HCT116 (cell line): ENCODE measurements at regions of chr5 and their contacts with region 1.

Region 1: DNA sequence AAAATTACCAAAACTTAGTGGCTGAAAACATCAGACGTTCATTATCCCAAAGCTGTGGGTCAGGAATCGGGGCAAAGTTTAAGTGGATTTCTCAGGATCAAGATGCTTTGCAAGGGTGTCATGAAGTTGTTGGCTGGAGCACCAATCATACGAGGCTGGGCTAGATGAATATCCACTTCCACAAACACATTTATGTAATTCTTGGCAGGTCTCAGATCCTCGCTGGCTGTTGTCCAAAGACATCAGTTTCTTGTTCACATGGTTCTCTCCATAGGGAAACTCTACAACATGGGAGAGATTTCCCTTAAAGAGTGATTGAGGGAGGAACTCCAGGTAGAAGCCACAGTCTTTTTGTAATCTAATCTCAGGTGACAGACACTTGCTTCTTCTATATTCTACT is 20.2 kb upstream of the CCDC192 start:
- DNase-seq: no peak
- ATAC-seq: no peak
- H3K4me3 ChIP-seq: no peak overlapping the region
- H3K27ac ChIP-seq: no peak overlapping the region
- H3K4me1 ChIP-seq: no peaks in the 10 kb centered on the region
- H3K27me3 ChIP-seq: no peaks in the 10 kb centered on the region
- CTCF ChIP-seq: no peak
- POLR2A ChIP-seq: no peak
- RAD21 ChIP-seq: no peak

Region 2: DNA sequence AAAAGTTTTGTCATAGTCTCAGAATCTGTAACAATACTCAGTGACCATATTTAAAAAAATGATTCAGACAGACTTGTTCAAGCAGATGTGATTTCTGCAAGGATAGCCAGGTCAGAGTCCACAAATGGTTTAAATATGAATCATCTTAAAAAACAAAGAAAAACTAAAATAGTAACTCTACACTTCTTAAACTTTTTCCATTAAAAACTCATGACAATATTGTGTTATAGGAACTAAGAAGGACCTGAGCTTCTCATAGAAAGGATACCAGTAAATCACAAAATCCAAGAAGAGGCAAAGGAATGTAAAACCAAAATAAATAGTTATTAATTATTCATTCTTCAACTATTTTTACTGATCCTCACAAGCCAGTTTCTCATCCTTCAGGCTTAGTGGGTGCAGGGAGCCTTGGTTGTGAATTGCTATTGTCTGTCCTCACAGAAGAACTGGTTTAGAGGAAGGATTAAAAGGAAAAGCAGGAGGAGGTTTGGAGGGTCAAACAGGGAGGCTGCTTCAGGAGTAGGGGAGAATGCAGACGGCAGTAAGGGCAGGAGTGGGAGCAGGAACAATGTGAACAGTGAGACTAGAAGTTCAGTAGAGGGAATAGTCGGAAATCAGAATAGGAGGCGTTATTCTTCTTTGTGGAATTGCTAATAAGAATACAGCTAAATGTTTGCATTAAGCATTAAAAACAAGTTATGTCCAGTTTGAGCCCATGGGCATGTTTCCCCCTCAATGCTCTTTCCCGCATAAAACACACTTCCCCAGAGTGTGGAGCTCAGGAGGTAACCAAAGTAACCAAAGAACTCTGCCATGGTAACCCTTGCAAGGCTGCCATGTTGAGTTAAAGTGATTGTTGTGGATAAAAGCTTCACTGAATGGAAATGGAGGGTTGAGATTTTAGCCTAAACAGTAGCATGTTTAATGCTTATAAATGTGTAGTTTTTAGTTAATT is 130.9 kb after region 1 on chr5:
- CTCF ChIA-PET with region 1: no interaction called
- POLR2A ChIA-PET with region 1: no interaction called
- RAD21 ChIA-PET with region 1: no interaction called
- intact Hi-C with region 1: loop called (anchors 5 kb)
- DNase-seq: no peak
- ATAC-seq: peak; percentile 63
- H3K4me3 ChIP-seq: peak overlapping the region in 1 of 2 experiments; percentile 4; a peak in 1 of 4 replicates
- H3K27ac ChIP-seq: no peak overlapping the region; the same call in 1 of the 2 replicates
- H3K4me1 ChIP-seq: peaks cover 12 to 23% of the 10 kb centered on the region in 2 experiments; a peak in 3 of 4 replicates
- H3K27me3 ChIP-seq: no peaks in the 10 kb centered on the region
- CTCF ChIP-seq: no peak
- POLR2A ChIP-seq: no peak
- RAD21 ChIP-seq: no peak